ENCODE measurements at regions of chr12 and their contacts with region 1.

Region 1: GRCh38 chr12:65121049-65121955 is at the start of gene WIF1:
- DNase-seq: peak in 1 of 2 experiments; percentile 23
- H3K4me3 ChIP-seq: no peak within 1 kb of the TSS
- H3K27ac ChIP-seq: no peak within 1 kb of the TSS
- H3K4me1 ChIP-seq: no peaks in the 10 kb centered on the region
- H3K27me3 ChIP-seq: no peaks in the 10 kb centered on the region
- CTCF ChIP-seq: no peak
- total RNA-seq, gene WIF1: not detected in 2 replicates

Region 2: GRCh38 chr12:64801381-64801780 is 319.9 kb before region 1 on chr12:
- CTCF ChIA-PET with region 1: interaction called, 9 read pairs
- POLR2A ChIA-PET with region 1: no interaction called
- intact Hi-C with region 1: loop called (anchors 1 kb)
- DNase-seq: no peak
- H3K4me3 ChIP-seq: no peak overlapping the region
- H3K27ac ChIP-seq: no peak overlapping the region
- H3K4me1 ChIP-seq: peaks cover 22% of the 10 kb centered on the region
- H3K27me3 ChIP-seq: no peaks in the 10 kb centered on the region
- CTCF ChIP-seq: peak; percentile 36

Measured in PC-9 (cell line).